ENCODE measurements at regions of chr2 and their contacts with region 1.

Region 1: DNA sequence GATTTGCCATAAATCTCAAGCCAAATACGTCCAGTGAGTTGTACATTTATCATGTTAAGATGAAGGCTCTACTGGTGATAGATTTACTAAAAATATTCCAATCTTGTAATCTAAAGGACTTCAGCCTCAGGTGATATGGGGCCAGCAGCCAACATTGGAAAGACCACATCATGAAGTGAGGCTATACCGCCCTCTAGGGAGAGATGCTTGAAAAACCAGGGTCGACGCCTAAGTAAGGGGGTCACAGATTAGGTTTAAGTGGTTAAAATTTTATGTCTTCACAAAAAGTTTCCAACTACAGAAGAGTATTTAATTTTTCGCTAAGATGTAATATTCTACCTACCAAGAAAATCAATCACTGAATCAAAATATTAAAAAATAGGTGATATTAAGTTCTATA is 33.3 kb downstream of the DOCK10 start:
- H3K4me3 Mint-ChIP-seq: no peak overlapping the region
- H3K27ac Mint-ChIP-seq: peak overlapping the region; percentile 86
- H3K4me1 Mint-ChIP-seq: peaks cover 78% of the 10 kb centered on the region
- H3K27me3 Mint-ChIP-seq: no peaks in the 10 kb centered on the region

Region 2: GRCh38 chr2:224570328-224570993 is 438.5 kb before region 1 on chr2:
- intact Hi-C with region 1: no loop called
- H3K4me3 Mint-ChIP-seq: no peak overlapping the region
- H3K27ac Mint-ChIP-seq: no peak overlapping the region
- H3K4me1 Mint-ChIP-seq: peaks cover 63% of the 10 kb centered on the region
- H3K27me3 Mint-ChIP-seq: no peaks in the 10 kb centered on the region

Region 3: GRCh38 chr2:224894356-224894755 is 114.6 kb before region 1 on chr2:
- intact Hi-C with region 1: loop called (anchors 5 kb)
- H3K4me3 Mint-ChIP-seq: peak overlapping the region; percentile 39
- H3K27ac Mint-ChIP-seq: peak overlapping the region; percentile 89
- H3K4me1 Mint-ChIP-seq: peaks cover 76% of the 10 kb centered on the region
- H3K27me3 Mint-ChIP-seq: no peaks in the 10 kb centered on the region

Region 4: DNA sequence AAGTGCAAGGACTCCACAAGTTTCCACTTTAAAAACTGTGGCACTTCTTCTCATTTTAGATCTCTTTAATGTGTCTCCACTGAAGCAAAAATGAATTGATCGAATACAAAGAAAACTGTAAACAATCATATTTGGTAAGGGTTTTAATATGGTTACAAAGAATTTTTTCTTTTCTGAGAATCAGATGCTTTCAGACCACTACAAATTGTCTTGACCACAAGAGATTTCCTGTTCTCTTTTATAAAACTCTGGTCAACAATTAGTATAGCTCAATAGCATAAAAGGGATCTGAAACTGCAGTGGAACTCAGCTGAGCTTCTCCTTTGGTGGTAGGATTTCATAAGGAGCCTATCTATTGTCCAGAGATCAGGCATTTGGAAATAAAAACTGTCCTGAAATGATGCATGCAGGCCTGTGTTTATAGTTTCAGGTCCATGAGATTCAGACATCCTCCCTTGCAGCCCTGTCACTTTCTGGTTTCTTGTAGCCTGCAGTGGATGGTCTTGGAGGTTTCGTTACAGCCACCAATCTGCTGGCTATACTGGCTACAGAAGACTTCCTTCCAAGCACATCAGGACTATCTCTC is 86.7 kb before region 1 on chr2:
- intact Hi-C with region 1: loop called (anchors 5 kb)
- H3K4me3 Mint-ChIP-seq: no peak overlapping the region
- H3K27ac Mint-ChIP-seq: peak overlapping the region; percentile 27
- H3K4me1 Mint-ChIP-seq: peaks cover 39% of the 10 kb centered on the region
- H3K27me3 Mint-ChIP-seq: no peaks in the 10 kb centered on the region

Region 5: GRCh38 chr2:225041851-225042799 is 33.2 kb after region 1 on chr2 and contains the start of gene DOCK10:
- intact Hi-C with region 1: loop called (anchors 5 kb)
- H3K4me3 Mint-ChIP-seq: peak within 1 kb of the TSS; percentile 88
- H3K27ac Mint-ChIP-seq: peak within 1 kb of the TSS; percentile 98
- H3K4me1 Mint-ChIP-seq: peaks cover 50% of the 10 kb centered on the region
- H3K27me3 Mint-ChIP-seq: peaks cover 15% of the 10 kb centered on the region

Measured in dendritic cell treated with granulocyte-macrophage colony-stimulating factor and Interleukin-4, amounts not matched to agents 40 ng/mL and 50 ng/mL, for 4 days (primary cell).